AG04449 (cell line): ENCODE measurements at regions of chr18 and their contacts with region 1.

Region 1: DNA sequence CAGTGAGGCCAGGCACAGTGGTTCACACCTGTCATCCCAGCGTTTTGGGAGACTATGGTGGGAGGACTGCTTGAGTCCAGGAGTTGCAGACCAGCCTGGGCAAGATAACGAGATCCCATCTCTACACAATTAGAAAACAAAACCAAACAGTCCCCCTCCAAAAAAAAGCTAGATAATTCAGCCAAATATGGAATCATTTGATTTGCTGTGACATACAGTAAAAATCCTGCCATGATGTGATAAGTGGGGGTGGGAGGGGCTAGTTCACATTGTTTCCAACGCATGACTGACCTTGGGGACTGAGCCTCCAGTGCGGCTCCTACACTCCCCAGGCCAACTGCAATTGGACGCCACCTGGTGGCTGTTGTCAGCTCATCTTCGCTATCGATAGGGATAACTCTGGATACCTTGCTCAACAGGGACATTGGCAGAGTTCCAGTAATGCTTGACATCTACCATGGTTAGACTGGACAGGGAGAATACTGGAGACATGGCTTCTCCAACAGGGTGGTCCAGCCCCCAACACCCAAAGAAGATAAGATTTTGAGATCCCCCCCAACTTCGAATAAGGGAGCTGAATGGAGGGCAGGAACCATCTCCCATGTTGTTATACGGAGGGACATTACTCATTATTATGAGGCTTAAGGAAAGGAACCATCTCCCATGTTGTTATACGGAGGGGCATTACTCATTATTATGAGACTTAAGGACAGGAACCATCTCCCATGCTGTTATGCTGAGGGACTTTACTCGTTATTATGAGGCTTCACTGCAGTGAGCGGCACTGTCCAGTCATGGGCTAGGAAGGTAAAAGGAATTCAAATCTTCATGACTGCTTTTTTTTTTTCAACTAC is 135.9 kb downstream of the TGIF1 start:
- DNase-seq: no peak
- H3K4me3 ChIP-seq: no peak overlapping the region
- CTCF ChIP-seq: peak; percentile 80

Region 2: DNA sequence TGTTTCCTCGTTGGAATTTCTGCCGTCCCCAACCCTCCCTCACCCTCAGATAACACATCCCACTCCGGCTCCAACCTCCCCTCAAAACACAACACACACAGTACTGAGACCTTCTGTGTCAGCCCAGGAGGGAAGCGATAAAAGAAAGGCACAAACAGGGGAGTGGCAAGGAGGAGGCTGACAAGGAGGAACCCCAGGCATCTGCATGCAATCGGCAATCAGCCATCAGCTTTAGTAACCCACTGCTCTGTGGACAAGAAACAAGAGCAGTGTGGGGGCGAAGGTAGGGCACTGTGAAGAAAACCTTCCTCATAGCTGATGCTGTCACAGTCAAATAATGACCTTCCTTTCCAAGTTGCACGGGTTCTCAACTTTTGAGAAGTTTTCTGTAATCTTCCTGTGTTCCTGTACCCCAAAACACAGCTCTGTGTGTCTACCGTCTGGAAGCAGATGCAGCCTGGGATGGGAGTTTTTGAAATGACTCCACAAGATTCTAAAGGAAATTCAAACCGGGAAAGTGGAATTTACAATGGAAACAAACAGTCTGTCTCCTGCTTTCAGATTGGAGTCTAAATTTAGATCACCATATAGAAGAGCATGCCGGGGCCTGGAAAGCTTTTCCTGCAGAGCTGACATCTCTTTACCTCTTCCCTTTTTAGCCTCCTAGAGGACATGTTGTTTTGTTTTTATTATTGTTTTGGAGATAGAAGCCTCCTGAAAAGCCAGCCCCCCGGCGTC is 556.5 kb before region 1 on chr18:
- CTCF ChIA-PET with region 1: no interaction called
- POLR2A ChIA-PET with region 1: no interaction called
- DNase-seq: no peak
- H3K4me3 ChIP-seq: no peak overlapping the region
- CTCF ChIP-seq: no peak

Region 3: GRCh38 chr18:3447895-3448837 is 137.7 kb before region 1 on chr18:
- CTCF ChIA-PET with region 1: interaction called, 78 read pairs
- POLR2A ChIA-PET with region 1: no interaction called
- DNase-seq: no peak
- H3K4me3 ChIP-seq: peak overlapping the region; percentile 81
- CTCF ChIP-seq: peak; percentile 26

Region 4: DNA sequence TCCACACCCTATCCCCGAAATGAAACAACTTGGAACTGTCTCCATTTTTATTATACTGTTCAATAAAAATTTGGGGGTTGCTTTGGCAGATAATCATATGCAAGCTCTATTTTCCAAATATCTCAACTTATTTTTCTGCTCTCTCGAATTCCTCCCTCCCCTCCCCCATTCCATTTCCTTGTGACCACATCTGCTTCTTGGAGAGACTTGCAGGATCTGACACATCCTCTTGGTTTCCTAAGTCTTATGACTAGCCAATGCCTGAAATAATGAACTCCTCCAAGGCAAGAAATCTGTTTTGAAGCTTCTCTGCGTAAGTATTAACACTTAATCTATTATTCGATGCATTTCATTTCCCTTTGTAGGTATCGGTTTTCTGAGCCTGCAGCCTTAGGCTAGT is 119.8 kb before region 1 on chr18:
- CTCF ChIA-PET with region 1: interaction called, 12 read pairs
- POLR2A ChIA-PET with region 1: no interaction called
- DNase-seq: no peak
- H3K4me3 ChIP-seq: no peak overlapping the region
- CTCF ChIP-seq: no peak

Region 5: DNA sequence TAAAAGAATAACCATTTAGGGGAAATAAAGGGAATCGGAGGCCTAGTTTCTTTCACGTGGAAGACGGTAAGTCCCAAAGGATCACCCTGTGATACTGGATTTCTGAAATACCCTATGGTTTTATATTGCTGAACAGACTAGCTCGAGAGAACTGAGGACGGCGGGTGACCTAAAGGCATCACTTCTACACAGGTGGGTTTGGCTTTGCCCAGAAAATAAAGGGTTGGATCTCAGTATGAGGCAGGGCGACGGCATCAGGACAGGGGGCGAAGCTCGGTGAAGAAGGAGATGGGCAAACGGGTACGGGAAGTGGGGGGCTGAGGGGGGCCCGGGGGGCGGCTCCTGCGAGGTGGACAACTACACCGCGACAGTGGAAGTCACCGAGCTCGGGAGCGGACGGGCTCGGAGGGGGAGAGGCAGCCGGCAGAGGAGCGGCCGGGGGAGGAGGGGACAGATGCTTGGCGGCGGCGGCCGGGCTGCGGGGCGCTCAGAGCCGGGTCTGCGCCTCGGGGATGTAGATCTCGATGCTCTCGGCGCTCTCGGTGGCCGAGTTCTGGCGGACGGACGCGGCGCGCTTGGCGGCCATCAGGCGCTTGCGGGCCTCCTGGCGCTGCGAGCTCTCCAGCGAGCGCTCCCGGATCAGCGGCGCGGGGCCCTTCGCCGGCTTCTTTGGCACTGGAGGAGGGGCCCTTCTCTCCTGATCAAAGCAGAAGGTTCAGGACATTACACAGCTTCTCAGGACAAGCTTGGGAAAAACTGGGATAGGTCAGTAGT is 87.0 kb before region 1 on chr18:
- CTCF ChIA-PET with region 1: interaction called, 17 read pairs
- POLR2A ChIA-PET with region 1: no interaction called
- DNase-seq: no peak
- H3K4me3 ChIP-seq: peak overlapping the region; percentile 42
- CTCF ChIP-seq: no peak

Region 6: GRCh38 chr18:3566851-3567250 is 19.0 kb before region 1 on chr18:
- CTCF ChIA-PET with region 1: interaction called, 11 read pairs
- POLR2A ChIA-PET with region 1: no interaction called
- DNase-seq: no peak
- H3K4me3 ChIP-seq: no peak overlapping the region
- CTCF ChIP-seq: no peak